Common myeloid progenitor, CD34-positive (primary cell): ENCODE measurements at regions of chr14 and their contacts with region 1.

Region 1: DNA sequence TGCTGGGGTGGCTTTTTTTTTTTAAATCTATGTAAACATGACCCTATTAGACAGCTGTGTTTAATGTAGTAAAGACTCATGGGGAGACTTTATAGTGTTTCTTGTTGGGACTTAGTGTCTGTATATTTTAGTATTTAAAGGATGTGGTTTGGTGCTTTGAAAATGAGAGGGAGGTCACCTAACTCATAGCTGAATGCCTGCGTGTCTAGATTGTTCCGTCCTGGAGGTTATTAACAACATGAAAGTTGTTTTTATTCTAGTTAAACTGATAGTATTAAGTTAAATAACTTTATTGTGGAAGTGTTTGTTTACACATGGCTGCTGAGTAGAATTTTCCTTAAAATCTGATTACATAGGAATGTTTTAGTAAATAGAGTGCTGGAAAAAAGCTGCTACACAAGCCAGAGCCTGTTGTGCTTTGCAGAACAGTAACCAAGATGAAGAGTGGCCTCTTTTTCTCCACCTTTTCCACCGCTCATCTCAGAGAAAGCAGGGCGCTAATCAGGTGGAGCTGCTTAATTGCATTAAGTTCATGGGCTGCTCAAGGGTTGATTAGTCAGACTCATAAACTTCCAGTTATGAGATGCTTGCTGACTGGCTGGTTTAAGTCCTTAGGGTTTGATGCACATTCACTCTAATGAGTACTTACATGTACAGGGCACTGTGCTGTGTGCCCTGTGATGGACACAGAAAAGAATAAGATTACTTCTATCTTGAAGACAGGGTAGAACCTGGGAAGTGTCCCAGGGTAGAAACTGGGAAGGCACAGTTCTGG is 62.7 kb downstream of the FBXO34 start:
- DNase-seq: peak in 2 of 3 donors; percentile 23 to 51
- H3K4me3 ChIP-seq: no peak overlapping the region
- H3K27ac ChIP-seq: peak overlapping the region in 1 of 2 experiments; percentile 14
- H3K4me1 ChIP-seq: peaks cover 0 to 27% (median 13%) of the 10 kb centered on the region in 4 experiments
- H3K27me3 ChIP-seq: no peaks in the 10 kb centered on the region

Region 2: DNA sequence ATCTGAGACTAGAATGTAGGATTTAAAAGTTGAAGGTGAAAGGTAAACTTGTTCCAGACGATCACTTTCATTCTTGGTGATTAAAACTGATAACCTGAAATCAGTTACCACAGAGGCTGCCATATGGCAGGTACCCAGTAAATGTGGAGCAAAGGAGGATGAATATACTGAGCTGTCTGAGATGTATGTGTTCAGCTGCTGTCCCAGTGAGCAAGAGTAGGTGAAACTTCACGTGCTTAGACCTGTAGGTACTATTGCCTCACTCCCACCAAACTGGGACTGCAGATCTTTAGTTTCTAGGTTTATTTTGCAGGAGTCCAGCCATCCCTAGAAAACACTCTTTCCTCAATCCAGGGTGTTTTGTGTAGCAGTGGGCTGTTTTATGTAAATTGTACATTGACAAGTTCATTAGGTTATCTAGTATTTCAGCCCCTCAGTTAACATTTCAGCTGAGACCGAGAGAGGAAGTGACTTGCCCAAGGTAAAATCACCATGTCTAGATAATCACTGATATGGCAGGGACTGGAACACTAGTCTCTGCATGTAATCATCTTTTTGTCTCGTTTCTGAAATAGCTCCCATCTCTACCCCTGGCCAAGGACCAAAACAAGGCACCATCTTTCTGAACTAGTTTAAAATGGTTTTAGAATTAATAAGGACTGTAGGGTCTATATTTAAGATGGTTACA is 15.0 kb after region 1 on chr14:
- CTCF ChIA-PET with region 1: interaction called, 12 read pairs
- POLR2A ChIA-PET with region 1: interaction called, 3 read pairs
- DNase-seq: no peak
- H3K4me3 ChIP-seq: no peak overlapping the region
- H3K27ac ChIP-seq: no peak overlapping the region
- H3K4me1 ChIP-seq: no peaks in the 10 kb centered on the region
- H3K27me3 ChIP-seq: no peaks in the 10 kb centered on the region

Region 3: GRCh38 chr14:55398679-55399078 is 64.8 kb after region 1 on chr14:
- CTCF ChIA-PET with region 1: no interaction called
- POLR2A ChIA-PET with region 1: no interaction called
- DNase-seq: no peak
- H3K4me3 ChIP-seq: no peak overlapping the region
- H3K27ac ChIP-seq: no peak overlapping the region
- H3K4me1 ChIP-seq: no peaks in the 10 kb centered on the region
- H3K27me3 ChIP-seq: no peaks in the 10 kb centered on the region

Region 4: GRCh38 chr14:55482936-55483605 is 149.2 kb after region 1 on chr14:
- CTCF ChIA-PET with region 1: no interaction called
- POLR2A ChIA-PET with region 1: no interaction called
- DNase-seq: no peak
- H3K4me3 ChIP-seq: no peak overlapping the region
- H3K27ac ChIP-seq: no peak overlapping the region
- H3K4me1 ChIP-seq: no peaks in the 10 kb centered on the region
- H3K27me3 ChIP-seq: no peaks in the 10 kb centered on the region